GM12878 (cell line): ENCODE measurements at regions of chr17 and their contacts with region 1.

Region 1: GRCh38 chr17:73429440-73430164 is 117.8 kb upstream of the CDC42EP4 start:
- DNase-seq: peak; percentile 7
- ATAC-seq: peak; percentile 100
- H3K4me3 ChIP-seq: no peak overlapping the region
- H3K27ac ChIP-seq: no peak overlapping the region
- H3K4me1 ChIP-seq: no peaks in the 10 kb centered on the region
- H3K27me3 ChIP-seq: no peaks in the 10 kb centered on the region; a peak in 1 of 4 replicates
- CTCF ChIP-seq: peak; percentile 93 to 95 (median 93)
- EP300 ChIP-seq: no peak
- POLR2A ChIP-seq: no peak
- RAD21 ChIP-seq: peak; percentile 89

Region 2: GRCh38 chr17:73132085-73132492 is 297.5 kb before region 1 on chr17:
- CTCF ChIA-PET with region 1: no interaction called
- POLR2A ChIA-PET with region 1: no interaction called
- RAD21 ChIA-PET with region 1: no interaction called
- SMC1A ChIA-PET with region 1: no interaction called
- in situ Hi-C with region 1: no loop called
- intact Hi-C with region 1: no loop called
- DNase-seq: no peak
- ATAC-seq: peak; percentile 82
- H3K4me3 ChIP-seq: no peak overlapping the region
- H3K27ac ChIP-seq: no peak overlapping the region
- H3K4me1 ChIP-seq: peaks cover 4% of the 10 kb centered on the region; the same call in 1 of the 2 replicates
- H3K27me3 ChIP-seq: no peaks in the 10 kb centered on the region
- CTCF ChIP-seq: no peak
- EP300 ChIP-seq: no peak
- POLR2A ChIP-seq: no peak
- RAD21 ChIP-seq: no peak

Region 3: GRCh38 chr17:73956669-73957465 is 527.3 kb after region 1 on chr17:
- CTCF ChIA-PET with region 1: interaction called, 15 read pairs
- POLR2A ChIA-PET with region 1: no interaction called
- RAD21 ChIA-PET with region 1: interaction called, 6 read pairs
- SMC1A ChIA-PET with region 1: no interaction called
- in situ Hi-C with region 1: no loop called
- intact Hi-C with region 1: loop called (anchors 1 kb)
- DNase-seq: no peak
- ATAC-seq: peak; percentile 84
- H3K4me3 ChIP-seq: no peak overlapping the region
- H3K27ac ChIP-seq: no peak overlapping the region
- H3K4me1 ChIP-seq: no peaks in the 10 kb centered on the region
- H3K27me3 ChIP-seq: peaks cover 1 to 6% of the 10 kb centered on the region in 2 experiments; a peak in 3 of 4 replicates
- CTCF ChIP-seq: peak; percentile 55 to 61 (median 61)
- EP300 ChIP-seq: no peak
- POLR2A ChIP-seq: no peak
- RAD21 ChIP-seq: peak; percentile 65